ENCODE measurements at regions of chr14 and their contacts with region 1.

Region 1: DNA sequence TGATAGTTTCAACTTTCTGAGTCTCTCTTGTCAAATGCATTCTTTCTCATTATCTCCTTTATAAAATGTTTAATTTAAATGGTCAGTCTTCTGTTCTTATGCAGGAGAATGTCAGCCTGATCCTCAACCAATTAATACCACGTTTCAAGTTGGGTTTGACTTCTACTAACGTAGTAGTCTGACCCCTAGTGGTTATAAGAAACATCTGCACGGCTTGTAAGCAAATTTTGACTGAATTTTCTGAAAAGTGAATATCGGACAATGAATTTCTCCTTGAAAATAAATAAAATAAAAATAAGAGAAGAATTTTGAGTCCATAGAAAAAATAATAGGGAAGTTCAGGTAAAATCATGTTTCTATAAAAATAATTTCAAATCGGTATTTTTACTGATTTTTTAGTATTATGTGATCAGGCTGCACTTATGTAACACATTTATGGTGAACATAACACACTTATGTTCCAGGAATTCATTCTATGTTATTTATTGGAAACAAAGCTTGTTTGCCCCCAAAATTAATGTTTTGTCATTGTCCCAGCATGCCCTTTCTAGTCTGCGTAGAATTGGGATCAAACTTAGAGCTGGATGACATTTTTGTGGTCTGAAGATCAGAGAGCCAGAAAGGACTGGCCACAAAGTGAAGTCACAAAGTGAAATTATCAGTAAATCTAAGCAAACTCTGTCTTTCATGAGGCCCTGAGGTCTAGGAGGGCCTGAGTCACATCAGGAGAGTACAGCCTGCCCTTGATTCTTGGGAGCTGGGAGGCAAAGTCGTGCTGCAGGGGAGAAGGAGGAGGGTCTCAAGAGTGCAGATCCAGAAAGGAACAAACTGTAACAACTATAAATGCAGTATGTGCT is 101.2 kb upstream of the STXBP6 start:
- DNase-seq: peak; percentile 55
- H3K4me3 Mint-ChIP-seq: no peak overlapping the region
- H3K27ac Mint-ChIP-seq: no peak overlapping the region
- H3K4me1 Mint-ChIP-seq: no peaks in the 10 kb centered on the region
- H3K27me3 Mint-ChIP-seq: peaks cover 2% of the 10 kb centered on the region

Region 2: GRCh38 chr14:23640524-23641141 is 1510.5 kb before region 1 on chr14:
- intact Hi-C with region 1: no loop called
- DNase-seq: no peak
- H3K4me3 Mint-ChIP-seq: no peak overlapping the region
- H3K27ac Mint-ChIP-seq: no peak overlapping the region
- H3K4me1 Mint-ChIP-seq: no peaks in the 10 kb centered on the region
- H3K27me3 Mint-ChIP-seq: no peaks in the 10 kb centered on the region

Region 3: DNA sequence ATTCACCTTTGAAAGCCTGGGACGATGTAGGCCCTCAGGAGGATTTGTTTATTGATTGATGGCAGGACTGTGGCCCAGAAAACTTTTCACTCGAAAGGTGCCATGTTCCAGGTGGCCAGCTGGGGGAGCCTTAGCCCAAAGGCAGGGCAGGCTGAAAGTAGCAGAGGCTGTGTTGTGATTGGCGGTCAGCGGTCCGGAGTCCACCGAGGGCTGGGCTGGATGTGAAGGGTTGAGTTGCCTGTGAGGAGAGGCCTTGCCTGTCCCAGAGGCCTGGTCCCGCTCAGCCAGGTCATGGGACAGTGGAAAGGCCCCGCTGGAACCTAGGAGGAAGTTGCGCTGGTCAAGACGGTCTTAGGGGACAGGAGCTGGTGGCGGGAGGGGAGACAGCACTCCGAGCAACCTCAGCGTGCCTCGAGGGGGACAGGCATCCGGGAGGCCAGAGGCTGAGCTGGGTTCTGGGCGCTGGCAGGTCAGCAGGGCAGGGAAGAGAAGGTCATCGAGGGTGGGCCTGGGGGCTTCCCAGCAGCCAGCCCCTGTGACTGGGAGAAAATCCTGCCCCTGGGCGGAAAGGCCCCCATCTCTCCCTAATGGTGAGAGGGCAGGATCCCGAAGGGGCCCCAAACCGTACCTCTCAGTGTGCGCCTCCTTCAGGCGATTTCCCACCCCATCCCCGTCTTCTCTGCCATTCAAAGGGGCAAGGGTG is 669.4 kb before region 1 on chr14:
- intact Hi-C with region 1: loop called (anchors 5 kb)
- DNase-seq: peak; percentile 83
- H3K4me3 Mint-ChIP-seq: peak overlapping the region; percentile 39
- H3K27ac Mint-ChIP-seq: peak overlapping the region; percentile 56
- H3K4me1 Mint-ChIP-seq: peaks cover 19% of the 10 kb centered on the region
- H3K27me3 Mint-ChIP-seq: no peaks in the 10 kb centered on the region

Region 4: DNA sequence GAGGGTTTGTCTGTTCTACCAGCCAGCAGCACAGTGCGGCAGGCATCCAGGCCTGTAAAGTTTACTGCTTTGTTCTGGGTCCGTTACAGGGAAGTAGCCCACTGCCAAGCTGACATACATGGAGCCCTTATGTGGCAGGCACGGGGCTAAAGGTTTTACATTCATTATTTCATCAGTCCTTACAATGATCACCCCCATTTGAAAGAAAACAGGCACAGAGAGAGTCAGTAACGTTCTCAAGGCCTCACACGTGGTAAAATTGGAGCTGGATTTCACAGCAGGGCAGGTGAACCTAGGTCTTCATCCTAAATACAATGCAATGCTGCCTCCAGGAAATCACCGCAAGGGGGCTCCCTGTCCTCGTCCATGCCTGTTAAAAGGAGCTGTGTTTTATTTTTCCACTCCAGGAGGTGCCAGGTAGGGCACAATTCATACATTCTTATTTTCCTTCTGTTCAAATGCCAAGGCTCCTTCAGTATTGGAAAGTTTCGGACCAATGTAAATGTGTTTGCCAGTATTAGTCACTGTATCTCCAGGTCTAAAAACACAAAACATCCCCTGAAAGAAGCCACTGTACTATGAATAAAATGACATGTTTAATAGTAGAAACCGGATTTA is 345.0 kb before region 1 on chr14:
- intact Hi-C with region 1: loop called (anchors 5 kb)
- DNase-seq: peak; percentile 78
- H3K4me3 Mint-ChIP-seq: no peak overlapping the region
- H3K27ac Mint-ChIP-seq: no peak overlapping the region
- H3K4me1 Mint-ChIP-seq: no peaks in the 10 kb centered on the region
- H3K27me3 Mint-ChIP-seq: peaks cover 8% of the 10 kb centered on the region

Region 5: GRCh38 chr14:25132732-25133422 is 18.3 kb before region 1 on chr14:
- intact Hi-C with region 1: no loop called
- DNase-seq: peak; percentile 84
- H3K4me3 Mint-ChIP-seq: no peak overlapping the region
- H3K27ac Mint-ChIP-seq: no peak overlapping the region
- H3K4me1 Mint-ChIP-seq: peaks cover 6% of the 10 kb centered on the region
- H3K27me3 Mint-ChIP-seq: peaks cover 17% of the 10 kb centered on the region